Activated T-helper 1 cell treated with anti-CD3 and anti-CD28 coated beads, Interleukin-12 subunit alpha, Interleukin-12 subunit beta, Interleukin-2, Interleukin-4 antibody, amounts not matched to agents 30 ng/mL and 10 ng/mL and 1 ng/mL, durations not matched to agents 14 hours and 24 hours and 36 hours (primary cell): ENCODE measurements at regions of chr11 and their contacts with region 1.

Region 1: DNA sequence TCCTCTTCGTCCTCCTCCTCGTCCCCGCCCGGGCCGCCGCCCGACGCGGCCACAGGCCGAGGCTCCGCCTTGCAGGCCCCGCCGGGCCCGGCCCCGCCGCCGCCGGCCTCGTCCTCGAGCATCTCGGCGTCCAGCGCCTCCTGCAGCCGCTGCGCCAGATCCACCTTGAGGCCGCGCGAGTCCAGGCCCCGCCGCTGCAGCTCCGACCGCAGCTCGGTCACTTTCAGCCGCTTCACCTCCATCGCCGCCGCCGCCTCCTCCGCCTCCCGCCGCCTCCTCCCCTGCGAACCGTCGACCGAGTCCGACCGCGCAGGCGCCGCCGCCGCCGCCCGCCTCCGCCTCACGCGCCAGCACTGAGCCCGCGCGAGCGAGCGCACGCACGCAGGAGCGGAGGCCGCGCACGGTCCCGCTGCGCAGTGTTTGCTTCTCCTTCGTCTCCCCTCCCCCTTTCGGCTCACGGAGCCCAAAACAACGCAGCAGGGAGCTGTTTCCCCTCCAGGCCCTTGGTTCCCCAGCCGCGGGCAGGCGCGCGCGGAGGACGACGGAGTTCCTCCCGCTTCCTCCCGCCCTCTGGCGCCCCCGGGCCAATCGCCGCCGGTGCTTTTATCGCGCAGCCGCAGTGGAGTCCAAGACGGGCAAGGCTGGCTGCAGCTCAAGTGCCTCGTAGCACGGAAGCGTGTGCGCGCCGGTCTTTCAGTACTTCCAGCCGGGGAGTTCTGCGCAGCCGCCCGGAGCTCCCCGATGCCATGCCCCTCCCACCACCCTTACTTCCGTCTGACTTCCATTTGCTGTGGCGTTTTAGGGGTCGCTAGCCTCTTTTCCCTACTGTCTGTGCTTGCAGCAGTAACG is at the start of gene HNRNPUL2:
- DNase-seq: peak; percentile 99
- H3K4me3 Mint-ChIP-seq: peak within 1 kb of the TSS; percentile 91
- H3K27ac Mint-ChIP-seq: peak within 1 kb of the TSS; percentile 99
- H3K4me1 Mint-ChIP-seq: peaks cover 45% of the 10 kb centered on the region
- H3K27me3 Mint-ChIP-seq: no peaks in the 10 kb centered on the region
- total RNA-seq, gene HNRNPUL2: 53.0 and 55.2 TPM in 2 replicates

Region 2: DNA sequence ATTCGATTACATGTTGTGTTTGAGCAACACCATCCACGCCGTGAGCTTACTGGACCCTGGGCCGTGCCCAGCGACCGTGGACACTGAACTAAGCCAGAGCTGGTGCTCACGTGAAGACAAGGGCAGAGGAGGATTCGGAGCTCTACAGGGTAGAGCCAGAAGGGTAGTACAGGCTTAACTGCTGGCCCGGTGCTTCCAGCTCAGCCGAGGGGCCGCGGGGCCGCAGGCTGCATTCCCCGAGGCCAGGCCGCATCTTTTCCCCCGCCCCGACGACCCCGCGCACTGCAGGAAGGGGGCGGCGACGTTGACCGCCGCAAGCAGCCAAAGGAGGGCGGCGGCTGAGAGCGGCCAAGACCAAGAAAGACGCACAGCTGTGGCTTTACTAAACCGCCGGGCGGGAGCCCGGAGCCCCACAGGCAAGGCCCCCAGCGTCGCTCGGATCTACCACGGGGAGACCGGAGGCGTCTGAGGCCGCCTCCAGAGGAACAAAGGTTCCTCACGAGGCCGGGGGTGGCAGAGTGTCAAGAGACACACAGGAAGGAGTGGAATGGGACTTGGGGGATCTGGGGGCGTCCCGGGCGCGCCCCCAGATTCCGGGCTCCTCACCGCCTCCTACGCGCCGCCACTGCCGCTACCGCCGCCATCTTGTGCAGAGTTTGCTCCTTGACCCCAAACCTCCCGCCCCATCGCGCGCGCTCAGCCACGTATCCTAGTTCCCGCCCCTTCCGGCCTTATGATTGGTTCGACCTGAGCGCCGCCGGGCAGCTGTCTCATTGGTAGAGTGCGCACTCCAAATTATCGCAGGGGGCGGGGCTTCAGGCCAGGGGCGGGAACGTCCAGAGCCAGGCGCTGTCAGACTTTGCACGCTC is 80.9 kb before region 1 on chr11 and contains the start of gene GANAB:
- intact Hi-C with region 1: loop called (anchors 1 kb)
- DNase-seq: peak; percentile 97
- H3K4me3 Mint-ChIP-seq: peak within 1 kb of the TSS; percentile 100
- H3K27ac Mint-ChIP-seq: peak within 1 kb of the TSS; percentile 98
- H3K4me1 Mint-ChIP-seq: peaks cover 25% of the 10 kb centered on the region
- H3K27me3 Mint-ChIP-seq: no peaks in the 10 kb centered on the region
- total RNA-seq, gene GANAB: 238 and 255 TPM in 2 replicates

Region 3: GRCh38 chr11:62678770-62679696 is 48.1 kb before region 1 on chr11 and contains the start of gene UBXN1:
- intact Hi-C with region 1: loop called (anchors 1 kb)
- DNase-seq: peak; percentile 79
- H3K4me3 Mint-ChIP-seq: peak within 1 kb of the TSS; percentile 80
- H3K27ac Mint-ChIP-seq: peak within 1 kb of the TSS; percentile 82
- H3K4me1 Mint-ChIP-seq: peaks cover 36% of the 10 kb centered on the region
- H3K27me3 Mint-ChIP-seq: no peaks in the 10 kb centered on the region
- total RNA-seq, gene UBXN1: 125 and 128 TPM in 2 replicates

Region 4: GRCh38 chr11:62753736-62754603 is 26.8 kb after region 1 on chr11 and contains the start of gene ZBTB3:
- intact Hi-C with region 1: loop called (anchors 1 kb)
- DNase-seq: peak; percentile 95
- H3K4me3 Mint-ChIP-seq: peak within 1 kb of the TSS; percentile 89
- H3K27ac Mint-ChIP-seq: peak within 1 kb of the TSS; percentile 91
- H3K4me1 Mint-ChIP-seq: peaks cover 12% of the 10 kb centered on the region
- H3K27me3 Mint-ChIP-seq: no peaks in the 10 kb centered on the region
- total RNA-seq, gene ZBTB3: 8.7 and 9.1 TPM in 2 replicates

Region 5: GRCh38 chr11:62805076-62805892 is 78.1 kb after region 1 on chr11 and contains the start of gene NXF1:
- intact Hi-C with region 1: loop called (anchors 1 kb)
- DNase-seq: peak; percentile 95
- H3K4me3 Mint-ChIP-seq: peak within 1 kb of the TSS; percentile 100
- H3K27ac Mint-ChIP-seq: peak within 1 kb of the TSS; percentile 99
- H3K4me1 Mint-ChIP-seq: peaks cover 40% of the 10 kb centered on the region
- H3K27me3 Mint-ChIP-seq: peaks cover 2% of the 10 kb centered on the region
- total RNA-seq, gene NXF1: 155 and 158 TPM in 2 replicates

Region 6: GRCh38 chr11:62855571-62856332 is 128.6 kb after region 1 on chr11:
- intact Hi-C with region 1: loop called (anchors 1 kb)
- DNase-seq: peak; percentile 99
- H3K4me3 Mint-ChIP-seq: peak overlapping the region; percentile 98
- H3K27ac Mint-ChIP-seq: peak overlapping the region; percentile 98
- H3K4me1 Mint-ChIP-seq: peaks cover 71% of the 10 kb centered on the region
- H3K27me3 Mint-ChIP-seq: peaks cover 5% of the 10 kb centered on the region

Region 7: DNA sequence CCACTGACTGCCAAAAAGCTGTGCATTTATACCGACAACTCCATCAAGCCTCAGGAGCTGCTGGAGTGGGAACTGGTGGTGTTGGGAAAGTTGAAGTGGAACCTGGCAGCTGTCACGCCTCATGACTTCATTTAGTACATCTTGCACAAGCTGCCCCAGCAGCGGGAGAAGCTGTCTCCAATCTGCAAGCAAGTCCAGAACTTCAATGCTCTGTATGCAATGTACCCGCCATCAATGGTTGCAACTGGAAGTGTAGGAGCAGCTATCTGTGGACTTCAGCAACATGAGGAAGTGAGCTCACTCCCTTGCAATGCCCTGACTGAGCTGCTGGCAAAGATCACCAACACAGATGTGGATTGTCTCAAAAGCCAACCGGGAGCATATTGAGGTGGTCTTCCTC is 516.4 kb after region 1 on chr11 and contains the start of gene SLC22A25:
- intact Hi-C with region 1: no loop called
- DNase-seq: no peak
- H3K4me3 Mint-ChIP-seq: no peak within 1 kb of the TSS
- H3K27ac Mint-ChIP-seq: no peak within 1 kb of the TSS
- H3K4me1 Mint-ChIP-seq: no peaks in the 10 kb centered on the region
- H3K27me3 Mint-ChIP-seq: peaks cover 5% of the 10 kb centered on the region
- total RNA-seq, gene SLC22A25: not detected in 2 replicates